ENCODE measurements at regions of chr16 and their contacts with region 1.

Region 1: DNA sequence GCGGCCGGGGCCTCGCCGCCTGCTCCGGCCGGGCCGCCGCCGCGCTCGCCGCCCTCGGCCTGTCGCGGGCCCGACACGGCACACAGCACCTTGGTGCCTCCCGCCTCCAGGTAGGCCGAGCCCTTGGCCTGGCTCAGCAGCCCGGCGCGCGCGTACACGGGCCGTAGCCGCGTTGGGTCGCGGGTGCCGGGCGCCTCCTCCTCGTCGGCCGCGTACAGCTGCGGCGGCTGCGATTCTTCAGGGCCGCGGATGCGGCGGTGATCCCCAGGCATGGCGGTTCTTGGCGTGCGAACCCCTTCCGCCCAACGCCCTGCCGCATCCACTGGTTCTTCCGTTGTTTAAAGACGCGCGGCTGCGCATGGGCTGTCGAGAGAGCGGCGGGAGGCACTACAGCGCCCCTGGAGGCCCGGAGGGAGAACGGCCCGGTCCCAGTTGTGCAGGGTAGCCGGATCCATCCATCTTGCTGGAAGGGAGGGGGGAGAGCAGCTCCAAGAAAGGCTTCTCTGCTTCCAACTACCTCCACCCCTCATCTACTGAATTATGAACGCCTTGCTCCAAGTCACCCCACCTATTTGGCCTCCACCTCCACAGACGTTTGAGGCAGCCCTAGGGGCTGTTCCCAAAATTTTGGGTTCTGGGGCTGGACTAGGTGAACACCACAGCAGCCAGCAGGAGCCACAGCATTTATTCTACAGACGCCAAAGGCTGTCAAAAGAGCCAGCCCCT is at the start of gene EXOSC6:
- DNase-seq: peak; percentile 79 to 81
- ATAC-seq: peak; percentile 94 to 97
- H3K4me3 ChIP-seq: peak within 1 kb of the TSS; percentile 58 to 84 (median 68)
- H3K27ac ChIP-seq: peak within 1 kb of the TSS; percentile 55 to 85 (median 82)
- H3K4me1 ChIP-seq: peaks cover 17 to 21% of the 10 kb centered on the region in 2 donors
- H3K27me3 ChIP-seq: no peaks in the 10 kb centered on the region
- CTCF ChIP-seq: peak; percentile 61 to 94 (median 86)
- POLR2A ChIP-seq: peak; percentile 56 to 66
- total RNA-seq, gene EXOSC6: 15.3 to 33.2 (median 17.2) TPM

Region 2: DNA sequence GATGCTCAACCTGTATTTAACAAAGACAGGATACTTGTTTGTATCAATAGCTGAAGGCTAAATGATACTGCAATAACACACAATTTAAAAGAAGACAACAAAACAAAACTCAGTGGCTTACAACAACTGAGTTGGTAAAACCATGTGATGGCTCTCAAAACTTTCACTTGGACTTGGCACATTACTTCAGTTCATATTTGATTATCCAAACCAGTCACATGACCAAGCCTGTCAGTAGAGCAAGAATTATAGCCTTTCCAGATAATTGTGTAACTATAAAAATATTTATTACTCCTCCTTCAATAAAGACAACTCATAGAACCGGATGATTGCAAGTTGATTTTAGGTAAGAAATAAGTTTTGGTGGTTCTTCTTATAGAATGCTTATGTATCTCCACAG is 582.2 kb before region 1 on chr16:
- in situ Hi-C with region 1: loop called in 1 of 4 experiments (anchors 25 kb)
- intact Hi-C with region 1: no loop called
- DNase-seq: no peak
- ATAC-seq: no peak
- H3K4me3 ChIP-seq: no peak overlapping the region
- H3K27ac ChIP-seq: no peak overlapping the region
- H3K4me1 ChIP-seq: no peaks in the 10 kb centered on the region
- H3K27me3 ChIP-seq: no peaks in the 10 kb centered on the region
- CTCF ChIP-seq: no peak
- POLR2A ChIP-seq: no peak

Region 3: GRCh38 chr16:70158261-70158939 is 93.4 kb before region 1 on chr16:
- in situ Hi-C with region 1: loop called in 1 of 4 experiments (anchors 10 kb)
- intact Hi-C with region 1: no loop called
- DNase-seq: no peak
- ATAC-seq: no peak
- H3K4me3 ChIP-seq: no peak overlapping the region
- H3K27ac ChIP-seq: no peak overlapping the region
- H3K4me1 ChIP-seq: peaks cover 1 to 3% of the 10 kb centered on the region in 2 donors
- H3K27me3 ChIP-seq: no peaks in the 10 kb centered on the region
- CTCF ChIP-seq: no peak
- POLR2A ChIP-seq: no peak

Region 4: GRCh38 chr16:70289229-70290098 is 37.7 kb after region 1 on chr16 and contains the start of gene AARS1:
- in situ Hi-C with region 1: no loop called
- intact Hi-C with region 1: loop called (anchors 2 kb)
- DNase-seq: peak; percentile 97 to 98
- ATAC-seq: peak; percentile 99
- H3K4me3 ChIP-seq: peak within 1 kb of the TSS; percentile 69 to 82 (median 78)
- H3K27ac ChIP-seq: peak within 1 kb of the TSS; percentile 88 to 92 (median 90)
- H3K4me1 ChIP-seq: peaks cover 5% of the 10 kb centered on the region in 2 donors
- H3K27me3 ChIP-seq: no peaks in the 10 kb centered on the region
- CTCF ChIP-seq: peak in 1 of 5 experiments; percentile 8
- POLR2A ChIP-seq: peak; percentile 92 to 93
- total RNA-seq, gene AARS1: 58.0 to 80.4 (median 60.2) TPM

Region 5: DNA sequence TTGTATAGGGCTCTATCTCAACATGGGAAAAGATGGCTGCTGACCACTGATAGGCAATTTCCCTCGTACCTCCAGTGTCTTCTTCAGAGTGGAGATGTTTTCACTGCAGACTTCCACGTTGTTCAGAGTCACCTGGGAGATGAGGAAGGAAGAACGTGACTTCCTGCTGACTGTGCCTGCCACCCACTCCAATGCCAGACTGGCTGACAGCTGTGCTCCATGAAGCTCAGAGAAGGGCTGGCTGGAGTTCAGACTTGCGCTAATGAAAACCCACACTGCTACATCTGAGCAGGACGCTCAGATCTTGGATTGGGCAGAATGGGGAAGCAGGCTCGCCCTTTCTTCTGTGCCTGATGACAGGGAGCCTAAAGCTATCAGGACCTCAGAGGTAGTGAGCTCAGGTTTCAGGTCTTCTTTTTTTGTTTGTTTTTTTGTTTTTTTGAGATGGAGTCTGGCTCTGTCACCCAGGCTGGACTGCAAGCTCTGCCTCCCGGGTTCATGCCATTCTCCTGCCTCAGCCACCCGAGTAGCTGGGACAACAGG is 238.5 kb after region 1 on chr16:
- in situ Hi-C with region 1: no loop called
- intact Hi-C with region 1: no loop called
- DNase-seq: peak; percentile 84 to 85
- ATAC-seq: peak; percentile 93 to 95
- H3K4me3 ChIP-seq: no peak overlapping the region
- H3K27ac ChIP-seq: peak overlapping the region; percentile 25 to 87 (median 74)
- H3K4me1 ChIP-seq: peaks cover 8 to 12% of the 10 kb centered on the region in 2 donors
- H3K27me3 ChIP-seq: no peaks in the 10 kb centered on the region
- CTCF ChIP-seq: peak in 1 of 5 experiments; percentile 15
- POLR2A ChIP-seq: peak in 1 of 2 donors; percentile 36

Measured in gastrocnemius medialis (tissue), 4 donors.